ENCODE measurements at regions of chr12 and their contacts with region 1.

Region 1: DNA sequence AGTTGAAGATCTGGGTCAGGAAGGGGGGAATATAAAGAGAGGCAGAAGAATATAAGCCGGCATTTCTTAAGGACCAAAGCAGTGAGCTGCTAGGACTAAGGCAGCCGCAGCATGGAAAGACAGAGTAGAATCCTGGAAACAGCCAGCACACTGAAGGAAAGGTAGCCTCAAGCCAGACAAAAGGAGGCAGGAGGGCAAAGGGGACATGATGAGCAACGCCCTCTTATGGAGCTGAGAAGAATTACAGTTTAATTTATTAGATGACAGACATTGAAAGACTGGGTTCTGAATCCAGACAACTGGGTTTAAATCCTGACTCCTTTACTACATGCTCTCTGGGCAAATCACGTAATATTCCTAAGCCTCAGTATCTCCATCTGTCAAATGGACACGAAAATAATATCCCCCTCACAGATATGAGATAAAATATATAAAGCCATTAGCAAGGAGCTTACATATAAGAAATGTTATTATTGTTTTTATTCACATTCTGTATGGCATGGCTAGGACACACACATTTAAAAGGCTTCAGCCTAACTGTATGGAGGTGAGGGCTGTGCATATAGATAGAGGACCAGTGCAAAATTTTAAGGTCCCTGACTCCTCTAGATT is 8.1 kb upstream of the PCED1B start:
- DNase-seq: no peak
- H3K4me3 ChIP-seq: no peak overlapping the region
- H3K27ac ChIP-seq: no peak overlapping the region
- H3K4me1 ChIP-seq: no peaks in the 10 kb centered on the region
- H3K27me3 ChIP-seq: no peaks in the 10 kb centered on the region
- CTCF ChIP-seq: peak; percentile 26 to 45
- POLR2A ChIP-seq: no peak

Region 2: DNA sequence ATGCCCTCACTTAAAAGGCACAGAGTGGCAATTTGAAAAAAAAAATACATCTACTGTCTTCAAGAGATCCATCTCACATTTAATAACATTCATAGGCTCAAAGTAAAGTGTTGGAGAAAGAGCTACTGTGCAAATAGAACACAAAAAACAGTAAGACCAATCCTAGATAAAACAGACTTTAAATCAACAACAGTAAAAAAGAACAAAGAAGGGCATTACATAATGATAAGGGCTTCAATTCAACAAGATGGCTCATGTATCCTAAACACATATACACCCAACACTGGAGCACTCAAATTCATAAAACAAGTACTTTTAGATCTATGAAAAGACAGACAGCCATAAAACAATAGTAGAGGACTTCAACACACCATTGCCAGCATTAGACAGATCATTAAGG is 85.5 kb before region 1 on chr12:
- CTCF ChIA-PET with region 1: no interaction called
- POLR2A ChIA-PET with region 1: no interaction called
- dilution Hi-C with region 1: no loop called
- intact Hi-C with region 1: no loop called
- DNase-seq: no peak
- H3K4me3 ChIP-seq: no peak overlapping the region
- H3K27ac ChIP-seq: no peak overlapping the region
- H3K4me1 ChIP-seq: no peaks in the 10 kb centered on the region
- H3K27me3 ChIP-seq: peaks cover 1 to 8% of the 10 kb centered on the region in 2 experiments
- CTCF ChIP-seq: no peak
- POLR2A ChIP-seq: no peak

Region 3: GRCh38 chr12:47054659-47055058 is 16.7 kb before region 1 on chr12:
- CTCF ChIA-PET with region 1: interaction called, 10 read pairs
- POLR2A ChIA-PET with region 1: no interaction called
- dilution Hi-C with region 1: no loop called
- intact Hi-C with region 1: no loop called
- DNase-seq: no peak
- H3K4me3 ChIP-seq: no peak overlapping the region
- H3K27ac ChIP-seq: no peak overlapping the region
- H3K4me1 ChIP-seq: no peaks in the 10 kb centered on the region
- H3K27me3 ChIP-seq: peaks cover 8 to 16% of the 10 kb centered on the region in 2 experiments
- CTCF ChIP-seq: no peak
- POLR2A ChIP-seq: no peak

Region 4: DNA sequence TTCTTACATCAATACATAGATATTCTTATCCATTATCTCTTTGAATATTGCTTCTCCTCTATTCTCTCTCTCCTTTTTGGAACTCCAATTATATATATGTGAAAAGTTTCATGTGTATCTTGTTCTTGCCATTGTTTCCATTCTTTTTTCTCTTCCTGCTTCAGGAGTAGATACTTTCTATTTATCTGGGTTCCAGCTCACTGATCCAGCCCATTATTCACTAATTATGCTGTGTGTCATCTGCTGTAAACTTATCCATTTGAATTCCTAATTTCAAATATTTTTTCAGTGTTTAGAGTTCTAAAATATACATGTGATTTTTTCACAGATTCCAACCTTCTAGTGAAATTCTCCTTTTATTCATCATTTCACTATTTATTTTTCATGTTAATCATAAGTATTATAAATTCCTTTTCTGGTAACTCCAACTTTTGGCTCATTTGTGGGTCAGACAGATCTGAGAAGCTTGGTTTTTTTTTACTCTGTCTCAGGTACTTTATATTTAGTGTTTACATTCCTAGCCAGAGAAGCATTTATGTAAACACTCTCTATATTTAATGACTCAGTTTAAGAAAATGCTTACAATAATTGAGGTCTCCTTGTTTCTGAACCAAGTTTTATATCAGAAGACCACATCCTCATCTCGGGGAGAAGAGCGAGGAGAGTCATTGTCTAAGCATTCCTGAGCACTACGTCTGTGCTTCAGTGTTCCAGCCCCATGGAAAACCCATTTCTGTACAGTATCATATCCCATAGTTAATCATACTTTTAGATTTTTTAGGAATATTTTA is 24.3 kb after region 1 on chr12:
- CTCF ChIA-PET with region 1: interaction called, 11 read pairs
- POLR2A ChIA-PET with region 1: no interaction called
- dilution Hi-C with region 1: no loop called
- intact Hi-C with region 1: no loop called
- DNase-seq: peak; percentile 43
- H3K4me3 ChIP-seq: no peak overlapping the region
- H3K27ac ChIP-seq: peak overlapping the region; percentile 4
- H3K4me1 ChIP-seq: peaks cover 13% of the 10 kb centered on the region
- H3K27me3 ChIP-seq: no peaks in the 10 kb centered on the region
- CTCF ChIP-seq: no peak
- POLR2A ChIP-seq: no peak

Measured in endothelial cell of umbilical vein (primary cell).